ENCODE measurements at regions of chr11 and their contacts with region 1.

Region 1: DNA sequence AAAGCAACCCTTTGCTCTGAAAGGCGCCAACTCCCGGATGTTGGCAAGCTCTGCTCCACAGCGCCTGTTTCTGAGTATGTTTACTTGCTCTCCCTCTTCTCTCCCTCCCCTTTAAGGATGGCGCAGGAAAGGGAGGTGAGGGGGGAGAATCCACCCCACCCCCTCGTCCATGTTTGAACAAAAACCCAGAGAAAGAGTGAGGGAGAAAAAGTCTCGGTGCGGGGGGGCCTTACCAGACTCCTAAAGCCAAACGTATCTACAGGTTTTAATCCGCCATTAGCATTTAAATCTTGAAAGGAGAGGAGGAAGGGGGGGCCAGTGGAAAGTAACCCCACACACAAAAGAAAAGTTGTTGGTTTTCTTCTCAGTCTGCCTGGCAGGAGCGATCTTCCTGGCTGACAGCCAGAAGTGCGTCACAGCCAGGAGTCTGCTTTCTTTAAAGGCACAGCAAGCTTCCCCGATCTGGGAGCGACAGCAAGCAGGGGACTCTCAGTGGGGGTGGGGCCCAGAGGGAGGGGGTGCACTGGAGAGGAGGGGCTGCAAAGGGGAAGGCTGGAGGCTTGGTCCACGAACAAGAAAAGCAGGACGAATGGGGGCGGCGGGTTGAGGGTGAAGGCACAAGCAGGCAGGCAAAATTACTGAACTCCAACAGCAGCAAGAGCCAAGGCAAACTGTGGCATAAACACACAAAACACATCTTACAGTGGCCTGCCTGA is 39.5 kb downstream of the NUMA1 start:
- DNase-seq: peak; percentile 69 to 90 (median 78)
- ATAC-seq: peak; percentile 70 to 84 (median 72)
- H3K4me3 ChIP-seq: peak overlapping the region; percentile 78 to 81
- H3K4me3 Mint-ChIP-seq: no peak overlapping the region
- H3K27ac ChIP-seq: peak overlapping the region; percentile 92
- H3K27ac Mint-ChIP-seq: no peak overlapping the region
- H3K4me1 ChIP-seq: peaks cover 55 to 65% of the 10 kb centered on the region in 2 experiments
- H3K4me1 Mint-ChIP-seq: peaks cover 43 to 51% (median 50%) of the 10 kb centered on the region in 3 donors
- H3K27me3 ChIP-seq: no peaks in the 10 kb centered on the region
- H3K27me3 Mint-ChIP-seq: no peaks in the 10 kb centered on the region

Region 2: DNA sequence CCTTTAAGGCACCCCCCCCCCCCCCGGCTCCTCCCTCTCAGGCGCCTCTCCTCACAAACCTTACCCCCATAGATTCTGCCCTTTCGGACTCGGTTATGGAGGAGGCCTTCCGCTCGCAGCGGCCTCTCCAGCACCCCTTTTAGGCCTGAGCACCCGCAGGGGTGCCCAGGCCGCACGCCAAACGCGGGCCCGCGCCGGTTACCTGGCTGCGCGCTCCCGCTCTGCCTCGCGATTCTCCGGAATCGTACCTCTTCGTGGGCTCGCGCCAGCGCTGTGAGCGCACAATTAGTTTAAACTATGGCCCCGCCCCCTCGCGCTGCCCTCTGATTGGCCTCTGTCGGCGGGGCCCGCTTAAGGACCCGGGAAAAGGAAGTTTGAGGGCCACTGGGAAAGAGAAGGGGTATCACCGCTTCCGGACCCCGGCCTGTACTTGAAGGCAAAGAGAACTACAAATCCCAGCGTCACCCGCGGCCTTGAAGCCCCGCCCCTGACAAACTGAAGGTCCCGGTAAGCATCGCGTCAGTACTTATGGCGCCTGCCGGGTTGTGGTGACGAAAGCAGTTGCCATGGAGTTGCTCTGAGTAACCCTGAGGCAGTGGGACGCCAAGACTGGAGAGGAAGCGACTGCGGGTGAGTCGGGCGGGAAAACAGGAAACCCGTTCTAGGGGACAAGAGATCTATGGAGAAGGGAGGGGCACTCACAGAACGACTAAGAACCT is 39.5 kb after region 1 on chr11 and contains the starts of genes LRRC51 and NUMA1:
- CTCF ChIA-PET with region 1: interaction called, 4 to 8 read pairs
- POLR2A ChIA-PET with region 1: interaction called in 1 of 2 experiments, 12 read pairs
- DNase-seq: peak; percentile 96 to 100 (median 99)
- ATAC-seq: peak; percentile 89 to 92 (median 91)
- H3K4me3 ChIP-seq: peak within 1 kb of the TSS; percentile 71 to 83
- H3K4me3 Mint-ChIP-seq: peak within 1 kb of the TSS; percentile 93 to 98 (median 93)
- H3K27ac ChIP-seq: peak within 1 kb of the TSS; percentile 78
- H3K27ac Mint-ChIP-seq: peak within 1 kb of the TSS; percentile 94 to 97
- H3K4me1 ChIP-seq: peaks cover 9 to 21% of the 10 kb centered on the region in 2 experiments
- H3K4me1 Mint-ChIP-seq: peaks cover 48 to 58% (median 50%) of the 10 kb centered on the region in 3 donors
- H3K27me3 ChIP-seq: no peaks in the 10 kb centered on the region
- H3K27me3 Mint-ChIP-seq: no peaks in the 10 kb centered on the region
- total RNA-seq, gene LRRC51: 2.5 to 5.1 (median 3.7) TPM
- total RNA-seq, gene NUMA1: 237 to 386 (median 343) TPM

Measured in T-cell (primary cell).